HepG2 (cell line): ENCODE measurements at regions of chr16 and their contacts with region 1.

Region 1: DNA sequence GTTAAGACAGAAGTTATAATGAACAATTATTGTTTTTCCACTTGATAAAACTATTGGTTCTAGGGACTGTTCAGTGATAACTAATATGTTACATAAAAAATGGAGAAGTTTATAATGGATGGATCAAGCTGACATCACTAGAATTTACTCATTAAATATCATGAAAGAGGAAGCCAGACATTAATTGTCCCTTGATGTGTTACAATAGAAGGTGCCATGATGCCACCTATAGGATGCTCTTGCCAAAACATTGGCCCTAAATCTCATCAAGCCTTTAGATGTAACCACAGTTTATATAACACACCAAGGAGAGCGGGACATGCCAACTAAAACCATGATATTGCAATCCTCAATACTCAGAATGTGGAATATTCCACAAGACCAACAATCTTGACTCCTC is 147.9 kb upstream of the MON1B start:
- DNase-seq: no peak
- ATAC-seq: no peak
- H3K4me3 ChIP-seq: no peak overlapping the region
- H3K27ac ChIP-seq: no peak overlapping the region
- H3K4me1 ChIP-seq: no peaks in the 10 kb centered on the region
- H3K27me3 ChIP-seq: no peaks in the 10 kb centered on the region; a peak in 1 of 5 replicates
- CTCF ChIP-seq: peak; percentile 27; the same call in 1 of the 2 replicates
- EP300 ChIP-seq: no peak
- POLR2A ChIP-seq: no peak
- RAD21 ChIP-seq: no peak

Region 2: DNA sequence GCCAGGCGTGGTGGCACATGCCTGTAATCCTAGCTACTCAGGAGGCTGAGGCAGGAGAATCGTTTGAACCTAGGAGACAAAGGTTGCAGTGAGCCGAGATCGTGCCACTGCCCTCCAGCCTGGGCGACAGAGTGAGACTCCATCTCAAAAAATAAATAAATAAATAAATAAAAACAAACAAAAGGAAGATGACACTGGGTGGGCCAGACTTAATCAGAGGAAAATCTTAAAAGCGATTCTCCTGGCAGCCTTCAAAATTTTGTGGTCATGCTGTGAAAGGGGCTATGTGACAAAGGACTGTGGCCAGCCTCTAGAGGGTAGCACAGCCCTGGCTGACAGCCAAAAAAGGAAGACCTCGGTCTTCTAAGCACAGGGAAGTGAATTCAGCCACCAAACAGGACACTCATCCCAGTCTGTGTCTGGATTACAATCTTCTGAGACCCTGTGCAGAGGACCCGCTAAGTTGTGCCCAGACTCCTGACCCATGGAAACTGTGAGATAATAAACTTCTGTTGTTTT is 374.8 kb before region 1 on chr16:
- CTCF ChIA-PET with region 1: no interaction called
- POLR2A ChIA-PET with region 1: no interaction called
- in situ Hi-C with region 1: no loop called
- intact Hi-C with region 1: loop called (anchors 5 kb)
- DNase-seq: peak; percentile 25
- ATAC-seq: peak; percentile 70
- H3K4me3 ChIP-seq: no peak overlapping the region
- H3K27ac ChIP-seq: no peak overlapping the region
- H3K4me1 ChIP-seq: no peaks in the 10 kb centered on the region
- H3K27me3 ChIP-seq: no peaks in the 10 kb centered on the region
- CTCF ChIP-seq: no peak
- EP300 ChIP-seq: no peak
- POLR2A ChIP-seq: no peak
- RAD21 ChIP-seq: no peak

Region 3: DNA sequence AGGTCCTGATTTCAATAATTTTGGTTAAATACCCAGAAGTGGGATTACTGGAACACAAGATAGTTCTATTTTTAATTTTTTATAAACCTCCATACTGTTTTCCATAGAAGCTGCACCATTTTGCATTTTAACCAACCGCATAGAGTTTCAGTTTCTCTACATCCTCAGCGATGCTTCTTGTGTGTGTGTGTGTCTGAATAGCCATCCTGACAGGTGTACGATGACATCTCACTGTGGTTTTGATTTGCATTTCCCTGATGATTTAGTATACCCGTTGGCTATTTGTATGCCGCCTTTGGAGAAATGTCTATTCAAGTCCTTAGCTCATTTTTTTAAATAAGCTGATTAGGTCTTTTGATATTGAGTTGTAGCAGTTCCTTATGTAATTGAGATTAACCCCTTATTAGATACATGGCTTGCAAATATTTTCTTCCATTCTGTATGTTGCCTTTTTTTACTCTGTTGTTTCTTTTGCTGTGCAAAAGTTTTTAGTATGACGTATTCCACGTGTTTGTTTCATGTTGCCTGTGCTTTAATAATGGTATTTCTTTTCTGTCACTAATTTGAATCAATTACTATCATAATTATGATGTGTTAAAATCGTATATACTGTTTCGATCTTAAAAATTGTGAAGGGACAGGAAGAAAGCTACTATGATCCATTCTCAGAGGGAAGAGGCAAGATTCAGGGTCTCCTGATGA is 79.3 kb before region 1 on chr16:
- CTCF ChIA-PET with region 1: no interaction called
- POLR2A ChIA-PET with region 1: no interaction called
- in situ Hi-C with region 1: no loop called
- intact Hi-C with region 1: no loop called
- DNase-seq: no peak
- ATAC-seq: no peak
- H3K4me3 ChIP-seq: no peak overlapping the region
- H3K27ac ChIP-seq: no peak overlapping the region
- H3K4me1 ChIP-seq: no peaks in the 10 kb centered on the region
- H3K27me3 ChIP-seq: no peaks in the 10 kb centered on the region
- CTCF ChIP-seq: no peak
- EP300 ChIP-seq: no peak
- POLR2A ChIP-seq: no peak
- RAD21 ChIP-seq: no peak